Spleen (tissue), 13 donors: ENCODE measurements at regions of chr2 and their contacts with region 1.

Region 1: DNA sequence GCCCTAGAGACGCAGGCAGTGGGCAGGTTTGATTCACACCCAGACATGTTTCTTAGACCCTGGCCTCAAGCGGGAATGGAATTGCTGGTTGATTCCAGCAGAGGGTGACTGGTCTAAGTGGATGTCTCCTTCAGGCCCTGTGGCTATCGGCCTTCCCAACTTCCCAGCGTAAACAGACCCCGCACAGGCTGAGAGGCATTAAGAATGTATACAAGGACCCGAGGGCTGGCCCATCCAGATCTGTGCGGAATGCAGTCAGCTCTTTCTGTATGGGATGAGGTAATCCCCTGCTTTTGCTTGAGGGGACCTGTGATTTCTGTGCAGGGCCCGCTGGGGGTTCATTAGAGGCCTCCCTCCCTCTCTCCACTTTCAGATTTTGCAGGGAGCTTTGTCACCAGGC is 6.5 kb downstream of the ACKR3 start:
- DNase-seq: no peak
- H3K4me3 ChIP-seq: peak overlapping the region in 4 of 8 donors; percentile 1 to 69 (median 12)
- H3K27ac ChIP-seq: peak overlapping the region in 5 of 8 donors; percentile 9 to 59 (median 37)
- H3K4me1 ChIP-seq: peaks cover 0 to 50% (median 10%) of the 10 kb centered on the region in 6 donors
- H3K27me3 ChIP-seq: no peaks in the 10 kb centered on the region
- CTCF ChIP-seq: no peak
- POLR2A ChIP-seq: no peak

Region 2: DNA sequence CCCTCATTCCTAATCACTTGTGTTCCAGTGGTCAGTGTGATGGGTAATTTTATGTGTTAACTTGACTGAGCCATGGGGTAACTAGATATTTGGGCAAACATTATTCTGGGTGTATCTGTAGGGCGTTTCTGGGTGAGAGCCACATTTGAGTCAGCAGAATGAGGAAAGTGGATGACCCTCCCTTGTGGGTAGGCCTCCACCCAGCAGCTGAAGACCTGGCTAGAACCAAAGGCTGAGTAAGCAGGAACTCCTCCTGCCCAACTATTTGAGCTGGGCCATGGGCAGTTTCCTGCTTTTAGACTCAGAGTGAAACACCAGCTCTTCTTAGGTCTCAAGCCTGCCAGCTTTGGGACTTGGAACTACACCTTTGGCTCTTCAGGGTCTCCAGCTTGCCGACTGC is 135.4 kb after region 1 on chr2:
- intact Hi-C with region 1: loop called (anchors 10 kb)
- DNase-seq: peak; percentile 43
- H3K4me3 ChIP-seq: no peak overlapping the region
- H3K27ac ChIP-seq: peak overlapping the region in 3 of 8 donors; percentile 14 to 48 (median 17)
- H3K4me1 ChIP-seq: peaks cover 0 to 42% (median 18%) of the 10 kb centered on the region in 6 donors
- H3K27me3 ChIP-seq: peaks cover 0 to 18% (median 0%) of the 10 kb centered on the region in 7 donors
- CTCF ChIP-seq: no peak
- POLR2A ChIP-seq: no peak

Region 3: DNA sequence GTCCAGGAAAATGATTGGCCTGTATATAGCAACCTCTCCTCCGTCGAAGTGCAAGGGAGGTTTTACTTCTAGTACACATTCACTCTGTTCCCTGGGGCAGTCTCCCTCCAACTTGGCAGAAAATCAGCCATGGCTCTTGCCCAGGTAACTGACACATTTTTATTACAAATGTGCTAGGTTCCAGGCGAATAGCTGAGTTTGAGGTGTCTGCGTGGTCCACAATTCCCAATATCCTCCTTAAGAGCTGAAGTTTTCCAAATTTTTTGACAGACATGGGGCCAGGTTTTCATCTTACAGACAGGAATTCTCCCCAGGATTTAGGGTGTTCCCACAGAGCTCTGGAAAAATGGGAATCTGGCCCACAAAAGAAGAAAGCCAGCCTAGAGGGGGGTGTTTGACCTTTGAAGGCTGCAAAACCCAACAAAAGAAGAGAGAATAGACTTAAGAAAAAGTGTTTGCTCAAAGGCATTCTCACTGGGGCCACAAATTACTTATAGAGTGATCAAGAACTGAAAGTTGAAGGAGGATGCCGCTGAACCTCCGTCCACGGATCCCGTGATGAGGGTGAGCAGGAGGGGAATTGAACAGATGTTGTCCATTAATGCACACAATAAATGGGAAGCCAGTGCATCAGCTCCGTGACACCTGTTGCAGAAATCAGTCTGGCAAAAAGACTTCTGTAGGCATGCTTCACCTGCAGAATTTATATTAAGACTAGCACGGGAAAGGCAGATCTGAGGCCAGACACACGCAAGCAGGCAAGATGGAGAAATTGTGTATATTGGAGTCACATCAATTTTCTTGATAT is 267.3 kb after region 1 on chr2:
- intact Hi-C with region 1: no loop called
- DNase-seq: no peak
- H3K4me3 ChIP-seq: no peak overlapping the region
- H3K27ac ChIP-seq: no peak overlapping the region
- H3K4me1 ChIP-seq: no peaks in the 10 kb centered on the region
- H3K27me3 ChIP-seq: peaks cover 0 to 14% (median 0%) of the 10 kb centered on the region in 7 donors
- CTCF ChIP-seq: no peak
- POLR2A ChIP-seq: no peak

Region 4: DNA sequence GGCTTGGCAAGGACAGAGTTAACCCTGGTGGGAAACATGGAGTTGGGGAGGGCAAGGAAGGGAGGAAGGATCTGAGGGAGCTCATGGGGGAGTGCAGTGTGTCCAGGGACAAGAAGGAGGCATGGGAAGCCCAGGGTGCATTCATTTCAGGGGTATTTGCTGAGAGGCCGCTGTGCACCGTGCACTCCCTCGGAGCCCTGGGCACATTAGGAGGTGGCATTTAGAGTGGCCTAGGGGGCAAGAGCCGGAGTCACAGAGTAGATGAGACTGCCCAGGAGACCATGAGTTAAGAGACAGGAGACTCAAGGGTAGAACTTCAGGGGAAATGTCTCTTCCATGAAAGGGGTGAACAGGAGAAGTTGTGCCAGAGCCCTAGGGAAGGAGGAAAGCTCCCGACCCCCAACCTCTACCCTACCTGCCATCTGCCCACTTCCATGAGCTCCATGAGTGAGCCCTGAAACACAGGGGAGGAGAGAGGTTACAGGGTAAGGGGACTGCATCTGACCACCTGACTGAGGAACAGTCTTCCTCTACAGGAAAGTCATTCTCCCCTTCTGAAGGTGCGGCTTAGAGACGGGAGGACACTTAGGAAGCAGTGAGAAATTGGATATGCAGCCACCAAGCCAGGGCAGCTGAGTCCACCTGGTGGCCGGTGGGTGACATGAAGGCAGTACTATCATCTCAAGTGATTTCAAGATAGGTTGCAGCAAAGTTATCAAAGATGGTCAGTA is 451.1 kb after region 1 on chr2:
- intact Hi-C with region 1: loop called (anchors 10 kb)
- DNase-seq: peak; percentile 86
- H3K4me3 ChIP-seq: no peak overlapping the region
- H3K27ac ChIP-seq: peak overlapping the region in 1 of 8 donors; percentile 37
- H3K4me1 ChIP-seq: peaks cover 0 to 13% (median 4%) of the 10 kb centered on the region in 6 donors
- H3K27me3 ChIP-seq: no peaks in the 10 kb centered on the region
- CTCF ChIP-seq: peak; percentile 47 to 86 (median 73)
- POLR2A ChIP-seq: no peak

Region 5: GRCh38 chr2:237060534-237061312 is 484.6 kb after region 1 on chr2:
- intact Hi-C with region 1: loop called (anchors 10 kb)
- DNase-seq: no peak
- H3K4me3 ChIP-seq: no peak overlapping the region
- H3K27ac ChIP-seq: peak overlapping the region in 1 of 8 donors; percentile 60
- H3K4me1 ChIP-seq: peaks cover 0 to 38% (median 23%) of the 10 kb centered on the region in 6 donors
- H3K27me3 ChIP-seq: peaks cover 0 to 12% (median 0%) of the 10 kb centered on the region in 7 donors
- CTCF ChIP-seq: peak; percentile 40 to 74 (median 63)
- POLR2A ChIP-seq: no peak